ENCODE measurements at regions of chr13 and their contacts with region 1.

Region 1: GRCh38 chr13:60043262-60043661 is 120.5 kb downstream of the DIAPH3 start:
- DNase-seq: no peak
- ATAC-seq: no peak
- H3K4me3 ChIP-seq: no peak overlapping the region
- H3K27ac ChIP-seq: no peak overlapping the region
- H3K4me1 ChIP-seq: no peaks in the 10 kb centered on the region
- H3K27me3 ChIP-seq: no peaks in the 10 kb centered on the region
- CTCF ChIP-seq: no peak

Region 2: GRCh38 chr13:60028021-60028420 is 15.2 kb before region 1 on chr13:
- CTCF ChIA-PET with region 1: no interaction called
- POLR2A ChIA-PET with region 1: no interaction called
- intact Hi-C with region 1: no loop called
- DNase-seq: no peak
- ATAC-seq: no peak
- H3K4me3 ChIP-seq: no peak overlapping the region
- H3K27ac ChIP-seq: no peak overlapping the region
- H3K4me1 ChIP-seq: no peaks in the 10 kb centered on the region
- H3K27me3 ChIP-seq: no peaks in the 10 kb centered on the region
- CTCF ChIP-seq: no peak

Region 3: GRCh38 chr13:60061737-60062136 is 18.5 kb after region 1 on chr13:
- CTCF ChIA-PET with region 1: no interaction called
- POLR2A ChIA-PET with region 1: no interaction called
- intact Hi-C with region 1: loop called (anchors 1 kb)
- DNase-seq: no peak
- ATAC-seq: no peak
- H3K4me3 ChIP-seq: no peak overlapping the region
- H3K27ac ChIP-seq: no peak overlapping the region
- H3K4me1 ChIP-seq: no peaks in the 10 kb centered on the region
- H3K27me3 ChIP-seq: no peaks in the 10 kb centered on the region
- CTCF ChIP-seq: no peak